ENCODE measurements at regions of chr5 and their contacts with region 1.

Region 1: GRCh38 chr5:159987031-159987674 is 21.8 kb upstream of the TTC1 start:
- DNase-seq: peak; percentile 50 to 84 (median 70)
- ATAC-seq: peak; percentile 87
- H3K4me3 ChIP-seq: peak overlapping the region; percentile 47
- H3K4me3 Mint-ChIP-seq: peak overlapping the region; percentile 77
- H3K27ac ChIP-seq: no peak overlapping the region
- H3K27ac Mint-ChIP-seq: no peak overlapping the region
- H3K4me1 ChIP-seq: peaks cover 11% of the 10 kb centered on the region
- H3K4me1 Mint-ChIP-seq: no peaks in the 10 kb centered on the region
- H3K27me3 ChIP-seq: peaks cover 4 to 10% of the 10 kb centered on the region in 2 experiments
- H3K27me3 Mint-ChIP-seq: peaks cover 59% of the 10 kb centered on the region
- CTCF ChIP-seq: peak; percentile 69

Region 2: DNA sequence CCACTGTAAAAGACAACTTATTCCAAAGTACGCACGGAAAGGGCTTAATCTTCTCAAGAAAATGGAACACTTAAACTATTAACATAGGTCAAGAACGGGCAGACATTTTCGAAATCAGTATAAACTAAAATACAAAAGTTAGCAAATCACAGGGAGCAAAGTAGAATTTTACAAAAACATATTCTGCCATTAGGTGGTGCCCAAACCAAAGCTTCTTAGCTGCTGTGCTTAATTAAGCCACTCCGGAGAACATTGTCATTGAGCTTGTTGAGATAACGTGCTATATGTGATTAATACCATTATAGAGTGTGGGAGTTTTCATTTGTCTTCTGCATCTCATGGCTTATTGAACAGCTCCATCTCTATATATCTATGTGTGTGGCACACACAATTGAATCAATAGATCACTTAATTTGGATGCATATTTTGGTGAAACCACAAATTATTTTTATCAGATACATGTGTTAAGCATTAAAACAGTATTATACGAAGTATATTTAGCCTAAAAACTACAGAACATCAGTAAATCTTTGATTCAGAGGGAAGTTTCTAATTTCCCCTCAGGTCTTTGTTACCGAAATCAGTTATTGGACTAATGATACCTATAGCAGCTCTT is 700.6 kb before region 1 on chr5:
- CTCF ChIA-PET with region 1: interaction called, 17 read pairs
- POLR2A ChIA-PET with region 1: interaction called, 7 read pairs
- intact Hi-C with region 1: loop called (anchors 2 kb)
- DNase-seq: peak in 4 of 14 experiments; percentile 10 to 66 (median 52)
- ATAC-seq: peak; percentile 62
- H3K4me3 ChIP-seq: no peak overlapping the region
- H3K4me3 Mint-ChIP-seq: no peak overlapping the region
- H3K27ac ChIP-seq: no peak overlapping the region
- H3K27ac Mint-ChIP-seq: no peak overlapping the region
- H3K4me1 ChIP-seq: no peaks in the 10 kb centered on the region
- H3K4me1 Mint-ChIP-seq: no peaks in the 10 kb centered on the region
- H3K27me3 ChIP-seq: no peaks in the 10 kb centered on the region
- H3K27me3 Mint-ChIP-seq: no peaks in the 10 kb centered on the region
- CTCF ChIP-seq: peak; percentile 68

Region 3: GRCh38 chr5:159331093-159331973 is 655.8 kb before region 1 on chr5:
- CTCF ChIA-PET with region 1: interaction called, 4 read pairs
- POLR2A ChIA-PET with region 1: interaction called, 3 read pairs
- intact Hi-C with region 1: loop called (anchors 2 to 5 kb)
- DNase-seq: peak; percentile 64 to 86 (median 72)
- ATAC-seq: peak; percentile 95
- H3K4me3 ChIP-seq: peak overlapping the region; percentile 62
- H3K4me3 Mint-ChIP-seq: peak overlapping the region; percentile 77
- H3K27ac ChIP-seq: peak overlapping the region in 1 of 2 donors; percentile 17
- H3K27ac Mint-ChIP-seq: peak overlapping the region; percentile 39
- H3K4me1 ChIP-seq: peaks cover 21% of the 10 kb centered on the region
- H3K4me1 Mint-ChIP-seq: peaks cover 30% of the 10 kb centered on the region
- H3K27me3 ChIP-seq: peaks cover 0 to 4% of the 10 kb centered on the region in 2 experiments
- H3K27me3 Mint-ChIP-seq: no peaks in the 10 kb centered on the region
- CTCF ChIP-seq: peak; percentile 81

Region 4: DNA sequence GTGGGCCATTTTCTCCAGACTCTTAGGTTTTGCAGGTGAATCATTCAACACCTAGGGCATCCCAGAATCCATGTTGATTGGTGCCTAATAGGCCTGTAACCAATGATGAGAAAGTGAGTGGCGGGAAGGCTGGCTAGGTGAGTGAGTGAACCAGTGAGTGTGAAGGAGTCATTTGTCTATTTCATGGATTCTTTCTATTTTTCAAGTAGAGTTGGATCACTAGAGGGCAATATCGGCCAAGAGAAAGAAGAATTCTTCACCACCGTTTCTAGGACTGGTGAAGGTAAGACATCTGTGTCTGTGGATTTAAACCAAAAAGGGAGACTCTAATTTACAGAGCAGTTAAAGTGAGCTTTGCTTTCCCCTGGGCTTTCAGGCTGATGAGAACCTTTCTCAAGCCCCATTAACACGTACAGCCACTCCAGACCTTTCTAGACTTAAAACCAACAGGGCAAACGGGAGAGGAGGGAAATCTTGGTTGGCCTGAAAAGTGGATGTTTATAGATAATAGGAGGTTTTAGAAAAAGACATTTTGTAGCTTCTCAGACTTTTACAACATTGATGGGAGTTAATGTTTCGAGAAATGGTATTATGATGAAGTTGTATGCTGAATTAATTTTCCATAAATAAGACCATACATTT is 542.6 kb before region 1 on chr5:
- CTCF ChIA-PET with region 1: interaction called, 8 read pairs
- POLR2A ChIA-PET with region 1: no interaction called
- intact Hi-C with region 1: loop called in 1 of 2 experiments (anchors 1 kb)
- DNase-seq: peak in 3 of 14 experiments; percentile 53 to 65 (median 55)
- ATAC-seq: no peak
- H3K4me3 ChIP-seq: no peak overlapping the region
- H3K4me3 Mint-ChIP-seq: no peak overlapping the region
- H3K27ac ChIP-seq: no peak overlapping the region
- H3K27ac Mint-ChIP-seq: no peak overlapping the region
- H3K4me1 ChIP-seq: no peaks in the 10 kb centered on the region
- H3K4me1 Mint-ChIP-seq: no peaks in the 10 kb centered on the region
- H3K27me3 ChIP-seq: no peaks in the 10 kb centered on the region
- H3K27me3 Mint-ChIP-seq: no peaks in the 10 kb centered on the region
- CTCF ChIP-seq: peak; percentile 32